GM12878 (cell line): ENCODE measurements at regions of chrX and their contacts with region 1.

Region 1: GRCh38 chrX:56802921-56803849 is 74.1 kb downstream of the NBDY start:
- DNase-seq: peak; percentile 77
- ATAC-seq: peak; percentile 82
- H3K4me3 ChIP-seq: peak overlapping the region; percentile 60
- H3K27ac ChIP-seq: peak overlapping the region; percentile 84
- H3K4me1 ChIP-seq: peaks cover 20% of the 10 kb centered on the region
- H3K27me3 ChIP-seq: no peaks in the 10 kb centered on the region
- CTCF ChIP-seq: peak; percentile 62 to 82 (median 66)
- EP300 ChIP-seq: no peak
- POLR2A ChIP-seq: no peak
- RAD21 ChIP-seq: peak; percentile 91

Region 2: GRCh38 chrX:55389376-55389775 is 1413.8 kb before region 1 on chrX:
- CTCF ChIA-PET with region 1: no interaction called
- POLR2A ChIA-PET with region 1: no interaction called
- RAD21 ChIA-PET with region 1: no interaction called
- SMC1A ChIA-PET with region 1: no interaction called
- in situ Hi-C with region 1: no loop called
- intact Hi-C with region 1: no loop called
- DNase-seq: no peak
- ATAC-seq: no peak
- H3K4me3 ChIP-seq: no peak overlapping the region
- H3K27ac ChIP-seq: no peak overlapping the region
- H3K4me1 ChIP-seq: no peaks in the 10 kb centered on the region
- H3K27me3 ChIP-seq: no peaks in the 10 kb centered on the region
- CTCF ChIP-seq: no peak
- EP300 ChIP-seq: no peak
- POLR2A ChIP-seq: no peak
- RAD21 ChIP-seq: no peak

Region 3: GRCh38 chrX:56783450-56783831 is 19.7 kb before region 1 on chrX:
- CTCF ChIA-PET with region 1: interaction called, 11 read pairs
- POLR2A ChIA-PET with region 1: no interaction called
- RAD21 ChIA-PET with region 1: interaction called, 10 read pairs
- SMC1A ChIA-PET with region 1: interaction called, 5 read pairs
- in situ Hi-C with region 1: no loop called
- intact Hi-C with region 1: no loop called
- DNase-seq: peak; percentile 91
- ATAC-seq: peak; percentile 50
- H3K4me3 ChIP-seq: peak overlapping the region; percentile 29; the same call in 1 of the 2 replicates
- H3K27ac ChIP-seq: peak overlapping the region; percentile 80
- H3K4me1 ChIP-seq: peaks cover 17% of the 10 kb centered on the region
- H3K27me3 ChIP-seq: no peaks in the 10 kb centered on the region
- CTCF ChIP-seq: peak; percentile 41 to 59 (median 42); a peak in 5 of 6 replicates
- EP300 ChIP-seq: no peak
- POLR2A ChIP-seq: no peak
- RAD21 ChIP-seq: peak; percentile 68

Region 4: DNA sequence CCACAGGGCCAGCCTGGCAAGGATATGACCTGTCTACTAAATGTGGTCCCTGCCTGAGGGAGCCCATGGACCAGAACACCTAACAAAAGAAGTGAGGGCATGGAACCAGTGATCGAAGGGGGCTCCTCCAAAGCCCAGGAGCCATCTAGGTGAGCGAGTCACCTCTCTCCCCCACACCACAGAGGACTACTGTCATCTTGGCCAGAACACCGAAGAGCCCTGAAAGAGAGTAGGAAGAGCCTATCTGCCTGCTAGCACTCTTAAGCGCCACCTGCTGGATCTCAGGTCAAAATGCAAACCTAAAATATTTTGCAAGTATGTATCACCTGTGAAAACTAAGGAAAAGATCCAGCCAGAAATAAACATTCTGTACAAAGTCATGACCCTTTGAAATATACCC is 650.7 kb after region 1 on chrX:
- CTCF ChIA-PET with region 1: interaction called, 8 read pairs
- POLR2A ChIA-PET with region 1: no interaction called
- RAD21 ChIA-PET with region 1: no interaction called
- SMC1A ChIA-PET with region 1: interaction called, 3 read pairs
- in situ Hi-C with region 1: loop called (anchors 25 kb)
- intact Hi-C with region 1: loop called (anchors 1 kb)
- DNase-seq: peak; percentile 0
- ATAC-seq: peak; percentile 90
- H3K4me3 ChIP-seq: no peak overlapping the region
- H3K27ac ChIP-seq: no peak overlapping the region
- H3K4me1 ChIP-seq: no peaks in the 10 kb centered on the region
- H3K27me3 ChIP-seq: no peaks in the 10 kb centered on the region
- CTCF ChIP-seq: peak; percentile 65 to 71 (median 68)
- EP300 ChIP-seq: no peak
- POLR2A ChIP-seq: no peak
- RAD21 ChIP-seq: peak; percentile 70

Region 5: DNA sequence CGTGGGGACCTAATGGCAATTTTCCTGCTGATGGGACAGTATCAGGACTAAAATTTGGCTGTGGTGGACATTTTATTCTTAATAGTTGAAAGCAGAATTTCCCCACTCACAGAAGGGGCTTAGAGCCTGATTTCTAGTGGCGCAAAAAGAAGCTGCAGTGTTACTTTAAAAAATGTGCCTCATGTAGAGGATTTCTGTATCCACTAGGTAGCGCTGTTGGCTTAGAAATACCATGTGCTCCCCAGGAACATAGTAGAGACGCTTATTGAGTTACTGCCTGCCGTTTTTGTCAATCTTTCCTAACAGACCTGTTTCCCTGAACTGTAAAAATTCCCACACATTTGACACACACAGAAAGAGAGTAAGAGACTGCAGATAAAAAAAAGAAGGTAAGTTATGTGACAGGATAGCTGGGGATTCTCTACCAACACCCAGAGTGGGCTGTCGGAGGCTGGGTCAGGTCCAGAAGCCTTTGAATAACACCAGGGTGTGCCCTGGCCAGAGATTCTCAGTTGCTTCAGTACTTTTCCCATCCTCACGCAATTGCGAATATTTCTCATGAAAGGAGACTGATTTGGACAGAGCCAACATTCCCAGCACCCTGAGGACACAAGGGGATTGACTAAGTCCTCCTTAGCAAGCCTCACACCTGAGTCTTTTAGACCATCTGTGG is 1018.7 kb after region 1 on chrX:
- CTCF ChIA-PET with region 1: no interaction called
- POLR2A ChIA-PET with region 1: no interaction called
- RAD21 ChIA-PET with region 1: no interaction called
- SMC1A ChIA-PET with region 1: no interaction called
- in situ Hi-C with region 1: no loop called
- intact Hi-C with region 1: loop called (anchors 10 kb)
- DNase-seq: peak; percentile 13
- ATAC-seq: peak; percentile 90
- H3K4me3 ChIP-seq: no peak overlapping the region
- H3K27ac ChIP-seq: no peak overlapping the region
- H3K4me1 ChIP-seq: no peaks in the 10 kb centered on the region
- H3K27me3 ChIP-seq: no peaks in the 10 kb centered on the region
- CTCF ChIP-seq: peak; percentile 54 to 77 (median 64); a peak in 5 of 6 replicates
- EP300 ChIP-seq: no peak
- POLR2A ChIP-seq: no peak
- RAD21 ChIP-seq: peak; percentile 92

Region 6: DNA sequence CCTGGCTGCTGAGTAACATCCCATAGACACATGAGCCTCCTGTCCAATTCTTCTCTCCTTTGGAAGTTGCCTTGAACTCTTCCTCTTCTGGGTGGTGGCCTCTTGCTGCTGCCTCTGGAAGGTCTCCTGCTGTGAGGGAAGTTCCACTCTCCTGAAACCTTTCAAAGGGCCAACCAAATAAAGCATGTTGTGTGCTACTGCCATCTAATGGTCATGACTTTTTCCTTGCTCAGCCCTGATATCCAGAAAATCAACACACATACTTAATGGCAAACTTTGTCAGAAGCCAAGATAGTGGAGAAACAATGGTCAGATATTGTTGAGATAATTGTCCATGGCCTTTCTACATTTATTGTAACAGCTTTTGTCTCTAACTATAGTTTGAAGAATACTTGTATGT is 1126.2 kb after region 1 on chrX:
- CTCF ChIA-PET with region 1: no interaction called
- POLR2A ChIA-PET with region 1: no interaction called
- RAD21 ChIA-PET with region 1: no interaction called
- SMC1A ChIA-PET with region 1: no interaction called
- in situ Hi-C with region 1: loop called (anchors 25 kb)
- intact Hi-C with region 1: loop called (anchors 5 kb)
- DNase-seq: no peak
- ATAC-seq: peak; percentile 68
- H3K4me3 ChIP-seq: no peak overlapping the region
- H3K27ac ChIP-seq: no peak overlapping the region
- H3K4me1 ChIP-seq: no peaks in the 10 kb centered on the region
- H3K27me3 ChIP-seq: no peaks in the 10 kb centered on the region
- CTCF ChIP-seq: peak; percentile 46 to 55 (median 53); a peak in 5 of 6 replicates
- EP300 ChIP-seq: no peak
- POLR2A ChIP-seq: no peak
- RAD21 ChIP-seq: peak; percentile 51